ENCODE measurements at regions of chr14 and their contacts with region 1.

Region 1: DNA sequence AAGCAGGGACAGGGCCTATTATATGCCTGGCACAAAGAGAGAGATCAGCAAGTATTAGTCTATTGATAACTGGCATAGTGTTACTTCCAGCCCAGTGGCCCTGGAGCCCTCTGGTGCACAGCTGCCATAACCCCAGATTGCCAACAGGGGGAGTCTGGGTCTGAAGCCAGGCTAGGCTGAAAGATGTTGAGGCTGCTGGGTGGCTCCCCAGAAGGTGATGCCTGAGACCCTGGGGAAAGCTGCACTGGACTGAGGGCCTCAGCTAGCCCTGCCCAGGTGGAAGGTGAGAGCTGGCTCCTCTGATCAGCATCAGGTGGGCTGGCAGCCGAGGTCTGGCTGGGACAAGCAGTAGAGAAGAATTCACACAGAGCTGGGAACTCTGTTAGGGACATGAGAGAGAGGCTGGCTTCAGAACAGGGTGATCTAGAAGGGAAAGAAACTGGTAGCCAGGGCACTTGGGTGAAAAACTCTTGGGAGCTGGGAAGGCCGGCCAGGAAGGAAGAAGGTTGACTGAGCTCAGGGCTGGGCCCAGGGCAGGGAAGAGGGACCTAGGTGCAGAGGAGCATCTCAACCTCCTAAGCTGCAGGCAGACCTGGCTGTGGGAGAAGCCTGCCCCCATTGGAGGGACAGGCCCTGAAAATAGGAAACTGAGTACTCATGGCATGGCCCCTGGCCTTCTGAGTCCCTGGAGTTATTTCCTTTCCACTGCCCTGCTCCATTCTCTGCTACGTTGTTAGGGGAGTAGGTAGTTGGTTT is 3.9 kb downstream of the GZMH start:
- DNase-seq: peak; percentile 60
- H3K4me3 Mint-ChIP-seq: peak overlapping the region; percentile 82
- H3K27ac Mint-ChIP-seq: peak overlapping the region; percentile 93
- H3K4me1 Mint-ChIP-seq: peaks cover 54% of the 10 kb centered on the region
- H3K27me3 Mint-ChIP-seq: peaks cover 1% of the 10 kb centered on the region

Region 2: GRCh38 chr14:24179961-24180796 is 425.4 kb before region 1 on chr14:
- intact Hi-C with region 1: no loop called
- DNase-seq: no peak
- H3K4me3 Mint-ChIP-seq: no peak overlapping the region
- H3K27ac Mint-ChIP-seq: no peak overlapping the region
- H3K4me1 Mint-ChIP-seq: no peaks in the 10 kb centered on the region
- H3K27me3 Mint-ChIP-seq: no peaks in the 10 kb centered on the region

Region 3: DNA sequence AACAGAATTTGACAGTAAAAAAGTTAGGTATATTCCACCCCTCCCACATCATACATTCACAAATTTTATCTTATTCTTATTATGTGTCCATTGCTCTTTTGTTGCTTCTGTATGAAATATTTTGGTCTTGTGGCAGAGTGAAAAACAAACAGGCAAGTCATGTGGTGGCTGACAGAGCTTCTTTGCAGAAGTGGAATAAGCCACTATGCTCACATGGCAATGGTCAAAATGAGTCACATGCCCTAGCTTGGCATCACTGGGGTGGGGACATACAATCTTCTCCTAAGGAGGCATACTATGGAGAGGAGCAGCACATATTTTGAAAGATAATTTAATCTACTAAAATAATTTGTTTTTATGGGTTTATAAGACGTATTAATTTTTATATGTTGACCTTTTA is 69.9 kb before region 1 on chr14:
- intact Hi-C with region 1: no loop called
- DNase-seq: no peak
- H3K4me3 Mint-ChIP-seq: no peak overlapping the region
- H3K27ac Mint-ChIP-seq: no peak overlapping the region
- H3K4me1 Mint-ChIP-seq: peaks cover 9% of the 10 kb centered on the region
- H3K27me3 Mint-ChIP-seq: peaks cover 3% of the 10 kb centered on the region

Region 4: GRCh38 chr14:24576182-24576581 is 29.4 kb before region 1 on chr14 and contains the start of gene CTSG:
- intact Hi-C with region 1: no loop called
- DNase-seq: no peak
- H3K4me3 Mint-ChIP-seq: no peak within 1 kb of the TSS
- H3K27ac Mint-ChIP-seq: no peak within 1 kb of the TSS
- H3K4me1 Mint-ChIP-seq: peaks cover 6% of the 10 kb centered on the region
- H3K27me3 Mint-ChIP-seq: peaks cover 4% of the 10 kb centered on the region
- total RNA-seq, gene CTSG: not detected in 2 replicates

Region 5: DNA sequence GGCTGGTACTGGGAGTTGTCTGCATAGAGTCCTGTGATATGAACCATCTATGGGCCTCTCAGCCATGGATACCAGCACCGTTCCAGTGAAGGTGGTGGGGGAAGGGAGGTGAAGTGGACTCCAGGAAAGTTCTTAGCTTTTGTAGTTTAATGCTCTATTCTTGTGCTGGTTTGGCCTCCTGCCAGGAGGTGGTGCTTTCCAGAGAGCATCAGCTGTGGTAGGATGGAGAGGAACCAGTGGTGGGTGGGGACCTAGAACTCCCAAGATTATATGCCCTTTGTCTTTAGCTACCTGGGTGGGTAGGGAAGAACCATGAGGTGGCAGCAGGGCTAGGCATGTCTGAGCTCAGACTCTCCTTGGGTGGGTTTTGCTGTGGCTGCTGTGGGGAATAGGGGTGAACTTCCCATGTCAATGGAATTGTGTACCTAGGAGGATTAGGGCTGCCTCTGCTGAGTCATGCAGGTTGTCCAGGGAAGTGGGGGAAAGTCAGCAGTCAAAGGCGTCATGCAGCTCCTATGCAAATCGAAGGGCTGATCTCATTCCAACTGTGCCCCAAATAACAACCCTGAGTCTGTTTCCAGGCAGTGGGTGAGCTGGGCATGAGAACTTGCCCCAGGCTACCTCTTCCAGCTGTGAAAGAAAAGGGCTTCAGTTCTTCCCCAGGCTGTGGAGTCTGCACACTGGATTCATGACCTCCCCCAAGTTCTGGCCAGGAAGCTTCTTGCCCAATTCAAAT is 10.4 kb before region 1 on chr14:
- intact Hi-C with region 1: no loop called
- DNase-seq: no peak
- H3K4me3 Mint-ChIP-seq: no peak overlapping the region
- H3K27ac Mint-ChIP-seq: no peak overlapping the region
- H3K4me1 Mint-ChIP-seq: peaks cover 22% of the 10 kb centered on the region
- H3K27me3 Mint-ChIP-seq: peaks cover 8% of the 10 kb centered on the region

Region 6: DNA sequence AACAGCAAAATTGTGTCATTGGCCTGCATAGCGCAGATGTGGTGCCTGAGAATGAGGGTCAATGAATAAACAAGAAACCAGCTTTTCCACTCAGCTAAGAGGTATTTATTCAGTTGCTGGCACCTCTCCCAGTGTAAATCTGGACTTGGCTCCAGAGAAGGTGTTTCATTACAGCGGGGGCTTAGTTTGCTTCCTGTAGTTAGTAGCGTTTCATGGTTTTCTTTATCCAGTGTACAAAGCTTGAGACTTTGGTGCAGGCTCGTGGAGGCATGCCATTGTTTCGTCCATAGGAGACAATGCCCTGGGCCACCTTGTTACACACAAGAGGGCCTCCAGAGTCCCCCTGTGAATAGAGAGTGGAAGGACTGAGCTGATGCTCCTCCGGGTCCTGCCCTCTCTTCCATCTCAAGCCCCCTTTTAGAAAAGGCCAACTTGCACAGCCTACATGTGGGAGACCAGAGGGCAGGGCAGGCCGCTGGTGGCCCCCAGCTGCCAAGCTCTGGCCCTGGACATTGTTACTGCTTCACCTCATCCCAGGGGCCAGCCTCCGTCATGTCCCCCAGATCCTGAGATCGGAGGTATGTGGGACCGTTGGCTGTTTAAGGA is 25.4 kb after region 1 on chr14:
- intact Hi-C with region 1: loop called (anchors 1 kb)
- DNase-seq: no peak
- H3K4me3 Mint-ChIP-seq: peak overlapping the region; percentile 94
- H3K27ac Mint-ChIP-seq: peak overlapping the region; percentile 97
- H3K4me1 Mint-ChIP-seq: peaks cover 70% of the 10 kb centered on the region
- H3K27me3 Mint-ChIP-seq: no peaks in the 10 kb centered on the region

Region 7: DNA sequence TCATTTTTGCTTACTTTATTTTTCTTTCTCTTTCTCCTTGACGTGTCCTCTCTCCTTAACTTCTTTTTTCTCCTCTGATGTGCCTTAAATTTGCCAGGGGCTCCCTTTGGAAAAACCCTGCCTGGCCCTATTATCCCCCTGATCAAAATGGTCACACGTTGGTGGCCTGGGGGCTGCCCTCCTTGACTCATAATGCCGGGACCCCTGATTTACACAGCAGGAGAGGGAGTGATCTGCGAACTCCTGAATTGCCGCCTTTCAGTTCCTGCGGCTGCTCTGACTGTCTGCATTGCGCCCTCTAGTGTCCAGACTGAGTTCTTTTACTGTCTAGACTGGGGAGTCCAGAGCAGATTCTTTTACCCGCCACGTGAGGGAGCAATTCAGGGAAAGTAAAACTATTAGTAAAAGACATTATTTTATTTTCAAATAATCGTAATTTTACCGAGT is 73.2 kb after region 1 on chr14:
- intact Hi-C with region 1: loop called (anchors 1 kb)
- DNase-seq: peak; percentile 77
- H3K4me3 Mint-ChIP-seq: peak overlapping the region; percentile 74
- H3K27ac Mint-ChIP-seq: peak overlapping the region; percentile 94
- H3K4me1 Mint-ChIP-seq: peaks cover 67% of the 10 kb centered on the region
- H3K27me3 Mint-ChIP-seq: no peaks in the 10 kb centered on the region

Region 8: GRCh38 chr14:24734878-24735500 is 129.4 kb after region 1 on chr14:
- intact Hi-C with region 1: loop called (anchors 1 kb)
- DNase-seq: no peak
- H3K4me3 Mint-ChIP-seq: no peak overlapping the region
- H3K27ac Mint-ChIP-seq: no peak overlapping the region
- H3K4me1 Mint-ChIP-seq: no peaks in the 10 kb centered on the region
- H3K27me3 Mint-ChIP-seq: peaks cover 13% of the 10 kb centered on the region

Measured in activated T-helper 1 cell treated with anti-CD3 and anti-CD28 coated beads, Interleukin-12 subunit alpha, Interleukin-12 subunit beta, Interleukin-2, Interleukin-4 antibody, amounts not matched to agents 30 ng/mL and 10 ng/mL and 1 ng/mL, durations not matched to agents 14 hours and 24 hours and 36 hours (primary cell).